Activated CD4-positive, alpha-beta T cell treated with anti-CD3 and anti-CD28 coated beads for 36 hours (primary cell): ENCODE measurements at regions of chr1 and their contacts with region 1.

Region 1: GRCh38 chr1:205631727-205632373 is at the start of gene ELK4:
- DNase-seq: peak; percentile 100
- ATAC-seq: peak; percentile 84
- H3K4me3 Mint-ChIP-seq: peak within 1 kb of the TSS; percentile 95
- H3K27ac Mint-ChIP-seq: peak within 1 kb of the TSS; percentile 99
- H3K4me1 Mint-ChIP-seq: peaks cover 32% of the 10 kb centered on the region
- H3K27me3 Mint-ChIP-seq: no peaks in the 10 kb centered on the region
- total RNA-seq, gene ELK4: 54.0 to 57.4 TPM

Region 2: DNA sequence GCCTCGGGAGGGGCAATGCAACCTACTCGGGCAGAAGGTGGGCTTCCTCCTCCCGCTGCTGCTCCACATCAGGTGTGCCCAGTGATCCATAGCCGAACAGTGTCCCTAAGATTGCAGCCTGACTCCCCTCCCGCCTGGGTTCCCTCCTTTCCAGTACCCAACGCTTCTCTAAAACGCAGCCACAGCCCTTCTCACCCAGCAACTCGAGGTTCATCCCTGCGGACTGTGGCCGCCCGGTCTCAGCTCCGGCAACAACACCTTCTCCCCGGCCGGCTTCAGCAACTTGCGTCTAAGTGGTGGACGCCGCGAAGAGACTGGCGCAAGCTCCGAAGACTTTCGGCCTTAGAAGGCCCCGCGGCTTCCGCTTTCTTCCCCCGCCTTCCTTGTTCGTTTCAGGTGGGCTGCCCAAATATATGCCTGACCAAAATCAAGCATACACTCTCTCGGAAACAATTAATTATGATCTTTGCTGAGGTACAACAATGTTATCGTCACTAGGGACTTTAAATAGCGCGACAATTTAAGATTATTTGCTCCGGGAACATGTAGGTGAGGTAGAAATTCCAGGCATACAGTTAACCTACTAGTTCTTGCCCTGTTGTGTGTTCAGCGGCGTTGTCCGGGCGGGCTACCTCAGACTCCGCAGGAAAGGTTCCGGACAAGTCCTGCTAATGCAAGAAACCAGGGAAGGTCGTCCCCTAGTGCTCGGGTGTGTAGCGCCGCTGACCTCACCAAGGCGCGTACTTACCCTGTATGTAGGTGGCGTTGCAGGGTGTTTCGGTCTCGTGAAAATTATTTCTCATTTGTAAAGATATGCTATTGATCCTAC is 510.0 kb before region 1 on chr1 and contains the start of gene RBBP5:
- CTCF ChIA-PET with region 1: no interaction called
- POLR2A ChIA-PET with region 1: no interaction called
- intact Hi-C with region 1: loop called in 1 of 2 experiments (anchors 1 kb)
- DNase-seq: peak; percentile 96
- ATAC-seq: peak; percentile 98
- H3K4me3 Mint-ChIP-seq: peak within 1 kb of the TSS; percentile 98
- H3K27ac Mint-ChIP-seq: peak within 1 kb of the TSS; percentile 100
- H3K4me1 Mint-ChIP-seq: peaks cover 38% of the 10 kb centered on the region
- H3K27me3 Mint-ChIP-seq: no peaks in the 10 kb centered on the region
- total RNA-seq, gene RBBP5: 23.1 to 24.3 TPM

Region 3: DNA sequence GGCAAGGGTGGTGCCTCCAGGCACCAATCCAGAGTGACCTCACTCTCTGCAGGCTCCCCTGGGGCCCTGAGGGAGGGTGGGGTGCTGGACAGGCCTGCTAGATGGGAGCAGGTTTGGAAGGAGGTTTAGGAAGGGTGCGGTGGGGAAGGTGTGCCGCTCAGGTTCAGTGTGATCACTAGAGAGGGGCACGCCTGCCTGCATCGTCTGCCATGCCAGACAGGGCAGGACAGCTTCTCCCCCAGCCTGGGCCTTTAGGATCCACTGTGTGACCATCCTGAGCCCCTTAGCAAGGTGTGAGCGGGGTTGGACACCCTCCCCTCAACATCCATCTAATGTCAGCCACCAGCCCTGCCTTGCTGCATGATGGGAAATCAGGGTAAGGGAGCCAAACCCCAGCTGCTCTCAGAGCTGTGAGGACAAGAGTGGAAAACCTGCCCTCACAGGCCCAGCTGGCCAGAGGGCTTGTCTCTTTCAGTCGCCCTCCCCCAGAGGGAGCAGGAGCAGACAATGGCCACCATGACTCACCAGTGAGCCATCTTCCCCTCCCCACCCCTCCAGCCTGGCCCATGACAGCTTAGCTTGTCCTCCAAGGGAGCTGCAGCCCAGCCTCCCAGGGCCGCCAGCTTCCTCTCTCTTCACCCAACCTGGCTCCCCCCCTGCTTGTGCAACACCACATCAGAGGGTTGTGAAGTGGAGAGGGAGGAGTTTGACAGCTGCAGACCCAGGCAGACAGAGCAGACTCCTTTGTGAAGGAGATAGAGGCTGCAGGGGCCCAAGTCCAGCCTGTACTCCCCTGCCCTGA is 347.3 kb before region 1 on chr1:
- CTCF ChIA-PET with region 1: no interaction called
- POLR2A ChIA-PET with region 1: no interaction called
- intact Hi-C with region 1: loop called in 1 of 2 experiments (anchors 5 kb)
- DNase-seq: peak; percentile 92
- ATAC-seq: peak; percentile 73
- H3K4me3 Mint-ChIP-seq: peak overlapping the region; percentile 55
- H3K27ac Mint-ChIP-seq: peak overlapping the region; percentile 92
- H3K4me1 Mint-ChIP-seq: peaks cover 82% of the 10 kb centered on the region
- H3K27me3 Mint-ChIP-seq: no peaks in the 10 kb centered on the region

Region 4: GRCh38 chr1:205488086-205488723 is 143.6 kb before region 1 on chr1:
- CTCF ChIA-PET with region 1: no interaction called
- POLR2A ChIA-PET with region 1: no interaction called
- intact Hi-C with region 1: no loop called
- DNase-seq: peak; percentile 67
- ATAC-seq: peak; percentile 82
- H3K4me3 Mint-ChIP-seq: no peak overlapping the region
- H3K27ac Mint-ChIP-seq: no peak overlapping the region
- H3K4me1 Mint-ChIP-seq: no peaks in the 10 kb centered on the region
- H3K27me3 Mint-ChIP-seq: peaks cover 28% of the 10 kb centered on the region

Region 5: DNA sequence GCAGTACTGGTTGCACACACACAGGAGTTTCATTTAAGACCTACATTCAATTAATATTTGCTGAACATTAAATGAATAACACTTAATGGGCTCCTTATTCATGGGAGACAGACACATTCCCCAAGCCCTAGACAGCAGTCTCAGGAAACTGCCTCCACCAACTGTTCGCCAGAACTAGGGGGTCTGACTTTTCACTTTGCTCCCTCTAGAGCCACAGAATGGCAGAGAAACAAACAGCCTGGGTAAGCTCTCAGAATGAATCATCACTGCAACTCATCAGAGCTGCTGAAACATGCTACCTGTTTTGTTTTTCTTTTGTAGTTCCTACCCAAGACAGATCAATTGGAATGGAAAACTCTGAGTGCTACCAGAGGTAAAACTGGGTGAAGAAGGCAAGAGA is 31.8 kb before region 1 on chr1:
- CTCF ChIA-PET with region 1: interaction called, 219 read pairs
- POLR2A ChIA-PET with region 1: interaction called, 6 read pairs
- intact Hi-C with region 1: loop called in 1 of 2 experiments (anchors 2 kb)
- DNase-seq: peak; percentile 40
- ATAC-seq: peak; percentile 93
- H3K4me3 Mint-ChIP-seq: no peak overlapping the region
- H3K27ac Mint-ChIP-seq: peak overlapping the region; percentile 83
- H3K4me1 Mint-ChIP-seq: peaks cover 40% of the 10 kb centered on the region
- H3K27me3 Mint-ChIP-seq: no peaks in the 10 kb centered on the region

Region 6: DNA sequence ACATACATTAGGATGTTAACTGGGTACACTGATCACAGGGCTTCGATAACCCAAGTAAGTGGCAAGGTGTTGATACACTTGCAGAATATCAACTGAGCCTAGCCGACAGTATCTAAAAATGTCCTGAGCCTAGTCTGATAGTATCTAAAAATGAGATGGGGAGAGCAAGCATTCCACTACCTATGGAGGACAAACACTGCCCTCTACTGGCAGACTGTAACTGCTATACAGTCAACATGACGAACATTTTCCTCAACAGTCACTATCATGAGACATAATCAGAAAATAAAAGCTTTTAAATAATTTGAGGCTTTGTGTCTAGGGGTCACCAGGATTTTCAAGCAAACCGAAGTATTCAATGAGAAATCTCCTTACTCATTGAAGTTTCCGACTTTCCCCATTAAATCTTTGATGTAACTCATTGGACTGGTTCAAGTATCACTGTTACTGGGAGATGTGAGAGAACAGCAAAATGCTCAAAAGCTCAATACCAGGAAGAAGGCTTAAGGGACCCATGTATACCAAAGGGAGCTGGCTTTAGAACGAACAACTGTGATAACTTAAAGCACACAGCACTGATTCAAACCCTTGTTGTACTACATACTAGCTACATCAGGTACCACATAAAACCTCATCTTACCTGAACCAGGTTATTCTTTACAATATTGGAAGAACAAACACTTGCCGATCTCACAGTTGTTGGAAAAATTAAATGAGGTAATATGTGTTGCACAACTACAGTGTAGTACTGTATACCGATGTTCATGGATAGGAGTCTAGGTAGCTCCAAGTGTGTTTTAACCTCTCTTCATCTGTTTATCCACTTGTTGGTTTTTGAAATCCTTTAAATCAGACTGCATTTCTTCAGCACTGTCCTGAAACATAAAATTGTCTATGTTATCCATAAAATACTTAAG is 79.5 kb after region 1 on chr1:
- CTCF ChIA-PET with region 1: interaction called, 10 read pairs
- POLR2A ChIA-PET with region 1: no interaction called
- intact Hi-C with region 1: no loop called
- DNase-seq: peak; percentile 78
- ATAC-seq: peak; percentile 90
- H3K4me3 Mint-ChIP-seq: no peak overlapping the region
- H3K27ac Mint-ChIP-seq: peak overlapping the region; percentile 43
- H3K4me1 Mint-ChIP-seq: peaks cover 13% of the 10 kb centered on the region
- H3K27me3 Mint-ChIP-seq: no peaks in the 10 kb centered on the region

Region 7: GRCh38 chr1:205812878-205813754 is 181.3 kb after region 1 on chr1 and contains the start of gene SLC41A1:
- CTCF ChIA-PET with region 1: no interaction called
- POLR2A ChIA-PET with region 1: no interaction called
- intact Hi-C with region 1: loop called in 1 of 2 experiments (anchors 1 kb)
- DNase-seq: peak; percentile 94
- ATAC-seq: peak; percentile 96
- H3K4me3 Mint-ChIP-seq: peak within 1 kb of the TSS; percentile 81
- H3K27ac Mint-ChIP-seq: peak within 1 kb of the TSS; percentile 84
- H3K4me1 Mint-ChIP-seq: peaks cover 47% of the 10 kb centered on the region
- H3K27me3 Mint-ChIP-seq: no peaks in the 10 kb centered on the region
- total RNA-seq, gene SLC41A1: 34.4 to 41.5 TPM